Activated naive CD4-positive, alpha-beta T cell treated with anti-CD3 and anti-CD28 coated beads, Interleukin-2, amount 10 ng/mL, durations not matched to agents 7 days and 5 days (primary cell): ENCODE measurements at regions of chr17 and their contacts with region 1.

Region 1: GRCh38 chr17:75673487-75673886 is 6.3 kb downstream of the SAP30BP start:
- DNase-seq: no peak
- H3K4me3 Mint-ChIP-seq: no peak overlapping the region
- H3K27ac Mint-ChIP-seq: no peak overlapping the region
- H3K4me1 Mint-ChIP-seq: peaks cover 20% of the 10 kb centered on the region
- H3K27me3 Mint-ChIP-seq: no peaks in the 10 kb centered on the region

Region 2: GRCh38 chr17:75393523-75394331 is 279.8 kb before region 1 on chr17:
- CTCF ChIA-PET with region 1: no interaction called
- DNase-seq: peak; percentile 92
- H3K4me3 Mint-ChIP-seq: peak overlapping the region; percentile 87
- H3K27ac Mint-ChIP-seq: peak overlapping the region; percentile 81
- H3K4me1 Mint-ChIP-seq: peaks cover 68% of the 10 kb centered on the region
- H3K27me3 Mint-ChIP-seq: no peaks in the 10 kb centered on the region

Region 3: DNA sequence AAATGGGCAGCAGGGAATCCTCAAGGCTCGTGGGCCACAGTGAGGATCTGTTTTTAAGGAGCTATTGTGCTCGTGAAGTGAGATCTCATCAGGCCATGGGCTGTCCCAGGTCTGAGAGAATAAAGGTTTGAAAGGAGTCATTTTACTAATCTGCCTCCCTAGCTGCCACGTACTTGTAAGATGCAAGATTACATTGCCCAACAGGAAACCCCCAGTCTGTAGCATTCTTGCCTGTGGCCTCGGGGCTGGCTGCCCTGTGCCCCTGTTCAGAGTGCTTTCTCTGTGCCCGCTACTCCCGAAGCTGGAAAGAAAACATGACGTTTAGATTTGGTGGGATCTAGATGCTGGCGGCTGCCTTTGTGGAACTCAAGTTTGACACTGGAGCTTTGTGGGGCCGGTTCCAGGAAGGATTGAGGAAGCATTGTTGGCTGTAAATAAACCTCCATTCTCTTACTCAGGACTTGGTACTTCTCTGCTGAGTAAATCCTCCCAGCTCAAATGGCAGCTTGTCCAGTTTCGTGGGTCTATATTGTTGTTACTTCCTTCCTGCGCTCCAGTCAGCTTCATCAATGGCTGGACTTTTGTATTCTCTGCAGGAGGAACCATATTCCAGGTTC is 14.8 kb after region 1 on chr17:
- CTCF ChIA-PET with region 1: interaction called, 15 read pairs
- DNase-seq: no peak
- H3K4me3 Mint-ChIP-seq: no peak overlapping the region
- H3K27ac Mint-ChIP-seq: peak overlapping the region; percentile 92
- H3K4me1 Mint-ChIP-seq: peaks cover 57% of the 10 kb centered on the region
- H3K27me3 Mint-ChIP-seq: no peaks in the 10 kb centered on the region

Region 4: GRCh38 chr17:75705904-75706714 is 32.6 kb after region 1 on chr17:
- CTCF ChIA-PET with region 1: no interaction called
- DNase-seq: no peak
- H3K4me3 Mint-ChIP-seq: no peak overlapping the region
- H3K27ac Mint-ChIP-seq: no peak overlapping the region
- H3K4me1 Mint-ChIP-seq: no peaks in the 10 kb centered on the region
- H3K27me3 Mint-ChIP-seq: peaks cover 3% of the 10 kb centered on the region

Region 5: DNA sequence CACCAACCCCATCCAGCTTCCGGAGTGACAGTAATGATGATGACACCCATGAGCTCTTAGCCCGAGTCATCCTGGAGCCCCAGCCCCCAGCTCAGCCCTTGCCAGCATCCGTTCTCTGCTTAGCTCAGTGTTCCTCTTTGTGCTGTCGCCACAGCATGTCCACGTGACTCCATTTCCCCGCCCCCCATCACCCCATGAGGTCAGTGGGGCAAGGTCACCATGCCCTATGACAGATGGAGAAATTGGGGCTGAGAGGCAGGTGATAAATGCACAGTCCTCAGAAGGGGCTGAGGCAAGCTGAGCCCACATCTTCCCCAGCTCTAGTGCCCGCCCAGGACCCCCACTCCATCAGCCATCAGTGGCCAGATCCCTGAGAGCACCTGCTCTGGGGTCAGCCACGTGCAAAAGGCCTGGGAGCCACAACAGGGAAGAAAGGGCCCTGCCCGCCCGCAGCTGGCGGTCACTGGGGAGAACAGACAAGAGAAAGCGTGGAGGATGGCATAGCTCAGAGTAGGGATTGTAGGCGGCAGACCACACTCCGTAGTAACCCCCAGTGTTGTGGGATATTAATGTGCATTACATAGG is 64.8 kb after region 1 on chr17:
- CTCF ChIA-PET with region 1: interaction called, 10 read pairs
- DNase-seq: peak; percentile 48
- H3K4me3 Mint-ChIP-seq: no peak overlapping the region
- H3K27ac Mint-ChIP-seq: peak overlapping the region; percentile 39
- H3K4me1 Mint-ChIP-seq: peaks cover 9% of the 10 kb centered on the region
- H3K27me3 Mint-ChIP-seq: peaks cover 6% of the 10 kb centered on the region